ENCODE measurements at regions of chr14 and their contacts with region 1.

Region 1: DNA sequence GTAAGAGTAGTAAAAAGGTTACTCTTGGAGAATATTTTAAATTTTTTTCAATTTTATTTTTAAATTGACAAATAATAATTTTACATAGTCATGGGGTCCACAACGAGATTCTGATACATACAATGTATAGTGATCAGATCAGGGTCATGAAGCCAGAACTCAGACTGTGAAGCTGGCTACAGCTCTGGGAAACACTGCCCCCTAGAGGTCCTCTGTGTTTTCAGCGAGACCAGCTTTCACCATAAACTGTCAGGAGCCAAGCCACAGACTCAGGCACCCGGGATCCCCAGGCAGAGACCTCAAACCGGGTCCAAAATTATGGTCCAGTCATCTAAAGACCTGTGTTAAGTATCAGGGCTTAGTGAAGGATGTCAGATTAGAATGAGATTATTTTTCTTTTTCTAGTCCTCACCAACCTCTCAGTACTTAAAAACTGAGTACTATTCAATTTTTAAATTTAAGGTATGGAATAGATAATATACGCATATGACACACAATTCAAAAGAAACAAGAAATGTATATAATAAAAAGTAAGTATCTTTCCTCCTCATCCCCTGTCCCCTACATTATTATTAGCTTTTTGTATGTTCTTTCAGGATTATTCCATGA is 397.1 kb downstream of the MDGA2 start:
- DNase-seq: peak; percentile 70
- ATAC-seq: peak; percentile 64
- H3K4me3 ChIP-seq: no peak overlapping the region
- H3K27ac ChIP-seq: no peak overlapping the region
- H3K4me1 ChIP-seq: no peaks in the 10 kb centered on the region
- H3K27me3 ChIP-seq: peaks cover 21% of the 10 kb centered on the region
- CTCF ChIP-seq: peak; percentile 78

Region 2: GRCh38 chr14:47057364-47057763 is 221.0 kb before region 1 on chr14:
- CTCF ChIA-PET with region 1: no interaction called
- POLR2A ChIA-PET with region 1: no interaction called
- intact Hi-C with region 1: loop called (anchors 10 kb)
- DNase-seq: no peak
- ATAC-seq: no peak
- H3K4me3 ChIP-seq: no peak overlapping the region
- H3K27ac ChIP-seq: no peak overlapping the region
- H3K4me1 ChIP-seq: no peaks in the 10 kb centered on the region
- H3K27me3 ChIP-seq: no peaks in the 10 kb centered on the region
- CTCF ChIP-seq: no peak

Region 3: GRCh38 chr14:47427629-47428028 is 149.3 kb after region 1 on chr14:
- CTCF ChIA-PET with region 1: no interaction called
- POLR2A ChIA-PET with region 1: no interaction called
- intact Hi-C with region 1: no loop called
- DNase-seq: no peak
- ATAC-seq: no peak
- H3K4me3 ChIP-seq: no peak overlapping the region
- H3K27ac ChIP-seq: no peak overlapping the region
- H3K4me1 ChIP-seq: no peaks in the 10 kb centered on the region
- H3K27me3 ChIP-seq: 0 out of 2 replicates have a peak, but pooled peaks cover 4% of the 10 kb centered on the region
- CTCF ChIP-seq: no peak

Measured in PC-3 (cell line).